ENCODE measurements at regions of chr2 and their contacts with region 1.

Region 1: GRCh38 chr2:71558300-71559051 is 105.1 kb downstream of the DYSF start:
- DNase-seq: no peak
- H3K4me3 ChIP-seq: no peak overlapping the region
- H3K4me3 Mint-ChIP-seq: no peak overlapping the region
- H3K27ac ChIP-seq: no peak overlapping the region
- H3K27ac Mint-ChIP-seq: no peak overlapping the region
- H3K4me1 ChIP-seq: no peaks in the 10 kb centered on the region
- H3K4me1 Mint-ChIP-seq: no peaks in the 10 kb centered on the region
- H3K27me3 ChIP-seq: no peaks in the 10 kb centered on the region
- H3K27me3 Mint-ChIP-seq: peaks cover 0 to 8% of the 10 kb centered on the region in 2 donors

Region 2: DNA sequence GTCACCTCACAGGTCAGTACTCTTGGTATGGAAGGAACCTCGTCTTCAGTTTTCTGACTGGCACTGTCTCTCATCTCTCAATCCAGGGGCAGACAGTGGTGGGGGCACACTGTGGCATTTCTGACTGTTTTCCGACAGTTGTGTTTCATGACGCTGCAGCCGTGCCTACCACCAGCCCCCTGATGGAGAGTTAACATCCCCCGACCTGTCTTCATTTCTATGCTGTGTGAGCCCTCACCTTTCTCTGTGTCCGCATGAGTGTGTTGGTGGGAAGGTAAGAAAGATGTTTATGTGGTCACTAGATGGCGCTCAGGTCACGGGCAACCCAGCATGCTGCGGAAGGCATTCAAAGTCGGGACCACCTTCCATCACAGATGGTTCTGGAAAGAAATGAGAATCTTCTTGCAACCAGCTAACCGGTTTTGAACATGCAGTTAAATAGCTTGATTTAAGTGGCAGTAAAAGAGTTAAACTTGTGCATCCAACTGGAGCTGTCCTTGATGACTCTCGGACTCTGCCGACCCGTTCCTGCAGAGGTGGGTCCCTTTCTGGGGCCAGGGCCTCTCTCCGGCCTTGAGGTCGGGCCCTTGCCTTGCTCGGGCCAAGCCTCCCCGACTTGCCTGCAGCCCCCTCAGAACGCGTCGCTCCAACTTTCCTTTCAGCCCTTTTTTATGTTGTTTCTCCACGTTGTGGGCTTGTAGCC is 12.8 kb before region 1 on chr2:
- CTCF ChIA-PET with region 1: interaction called, 16 read pairs
- POLR2A ChIA-PET with region 1: no interaction called
- intact Hi-C with region 1: no loop called
- DNase-seq: peak in 4 of 5 donors; percentile 20 to 39 (median 28)
- H3K4me3 ChIP-seq: peak overlapping the region in 1 of 2 donors; percentile 22
- H3K4me3 Mint-ChIP-seq: peak overlapping the region; percentile 55 to 82 (median 70)
- H3K27ac ChIP-seq: no peak overlapping the region
- H3K27ac Mint-ChIP-seq: peak overlapping the region in 3 of 7 donors; percentile 4 to 80 (median 38)
- H3K4me1 ChIP-seq: peaks cover 6% of the 10 kb centered on the region
- H3K4me1 Mint-ChIP-seq: peaks cover 8 to 15% (median 12%) of the 10 kb centered on the region in 4 donors
- H3K27me3 ChIP-seq: no peaks in the 10 kb centered on the region
- H3K27me3 Mint-ChIP-seq: peaks cover 10 to 16% of the 10 kb centered on the region in 2 donors